Activated CD8-positive, alpha-beta memory T cell treated with anti-CD3 and anti-CD28 coated beads, Interleukin-2, amount 10 ng/mL, durations not matched to agents 7 days and 5 days (primary cell): ENCODE measurements at regions of chr7 and their contacts with region 1.

Region 1: GRCh38 chr7:129367700-129368388 is 66.4 kb upstream of the STRIP2 start:
- DNase-seq: peak; percentile 88
- ATAC-seq: peak; percentile 83
- H3K4me3 Mint-ChIP-seq: peak overlapping the region; percentile 70
- H3K27ac Mint-ChIP-seq: peak overlapping the region; percentile 87
- H3K4me1 Mint-ChIP-seq: peaks cover 40% of the 10 kb centered on the region
- H3K27me3 Mint-ChIP-seq: no peaks in the 10 kb centered on the region

Region 2: DNA sequence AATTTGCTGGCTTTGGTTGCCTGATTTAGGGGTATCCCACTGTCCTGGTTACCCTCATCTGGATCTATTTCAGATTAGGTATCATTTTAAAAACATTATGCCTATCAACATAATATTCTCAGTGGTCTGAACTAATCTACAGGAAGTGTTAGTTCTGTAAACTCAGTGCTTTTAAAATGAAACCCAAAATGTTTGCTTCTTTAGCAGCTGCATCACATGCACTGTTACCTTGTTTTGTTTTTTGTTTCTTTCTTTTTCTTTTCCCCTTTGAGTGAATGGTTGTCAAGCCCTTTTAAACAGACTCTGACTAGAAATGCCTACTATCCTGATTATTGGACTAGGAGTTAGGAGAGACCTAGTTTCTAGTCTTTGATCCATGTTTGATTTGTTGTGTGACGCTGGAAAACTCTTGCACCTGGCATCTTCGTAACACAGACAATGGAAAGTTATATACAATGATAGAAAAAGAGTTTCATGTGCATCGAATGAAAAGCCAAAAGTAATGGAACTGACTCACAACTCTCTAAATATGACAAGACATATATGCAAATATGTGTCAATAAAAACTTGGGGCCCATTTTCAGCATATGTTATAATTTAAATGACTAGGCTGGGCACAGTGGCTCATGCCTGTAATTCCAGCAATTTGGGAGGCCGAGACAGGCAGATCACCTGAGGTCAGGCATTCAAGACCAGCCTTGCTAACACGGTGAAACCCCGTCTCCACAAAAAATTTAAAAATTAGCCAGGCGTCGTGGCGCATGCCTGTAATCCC is 14.1 kb after region 1 on chr7:
- CTCF ChIA-PET with region 1: interaction called, 63 read pairs
- DNase-seq: no peak
- ATAC-seq: no peak
- H3K4me3 Mint-ChIP-seq: peak overlapping the region; percentile 15
- H3K27ac Mint-ChIP-seq: peak overlapping the region; percentile 73
- H3K4me1 Mint-ChIP-seq: peaks cover 35% of the 10 kb centered on the region
- H3K27me3 Mint-ChIP-seq: no peaks in the 10 kb centered on the region

Region 3: DNA sequence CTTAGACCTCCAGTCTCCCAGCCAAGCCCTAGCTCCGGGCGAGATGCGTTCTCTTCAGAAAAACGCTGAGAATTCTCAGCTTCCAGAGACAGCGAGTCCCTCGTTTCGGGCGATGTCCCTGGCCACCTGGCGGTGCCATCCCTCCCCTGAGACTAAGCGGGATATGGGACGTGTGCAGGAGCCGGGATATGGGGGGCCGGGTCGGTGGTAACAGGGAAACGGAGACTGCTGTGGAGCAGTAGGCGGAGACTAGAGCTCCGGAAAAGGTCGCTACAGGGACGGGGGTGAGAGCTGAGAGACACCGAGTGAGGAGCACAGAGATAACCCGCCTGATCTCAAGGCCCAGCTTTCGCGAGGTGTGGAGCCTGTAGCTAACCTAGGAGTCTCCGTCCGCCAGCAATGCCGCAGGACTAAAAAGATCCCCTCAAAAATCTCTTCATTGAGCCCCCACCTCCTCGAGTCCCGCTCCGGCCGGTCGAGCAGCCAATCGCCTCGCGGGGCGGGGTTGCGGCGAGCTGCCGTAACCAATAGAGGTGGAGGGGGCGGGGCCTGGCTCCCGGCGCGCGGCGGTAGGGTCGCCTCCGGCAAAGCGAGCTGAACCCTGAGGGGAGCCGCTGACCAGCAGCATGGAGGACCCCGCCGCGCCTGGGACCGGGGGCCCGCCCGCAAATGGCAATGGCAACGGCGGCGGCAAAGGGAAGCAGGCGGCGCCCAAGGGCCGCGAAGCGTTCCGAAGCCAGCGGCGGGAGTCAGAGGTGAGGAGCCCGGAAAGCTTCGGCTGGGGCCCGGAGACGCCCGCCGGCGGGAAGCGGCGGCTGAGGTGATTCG is 66.2 kb after region 1 on chr7 and contains the start of gene STRIP2:
- CTCF ChIA-PET with region 1: interaction called, 20 read pairs
- DNase-seq: peak; percentile 95
- ATAC-seq: peak; percentile 95
- H3K4me3 Mint-ChIP-seq: peak within 1 kb of the TSS; percentile 91
- H3K27ac Mint-ChIP-seq: peak within 1 kb of the TSS; percentile 82
- H3K4me1 Mint-ChIP-seq: peaks cover 34% of the 10 kb centered on the region
- H3K27me3 Mint-ChIP-seq: peaks cover 9% of the 10 kb centered on the region
- total RNA-seq, gene STRIP2: 15.6 to 19.0 TPM

Region 4: DNA sequence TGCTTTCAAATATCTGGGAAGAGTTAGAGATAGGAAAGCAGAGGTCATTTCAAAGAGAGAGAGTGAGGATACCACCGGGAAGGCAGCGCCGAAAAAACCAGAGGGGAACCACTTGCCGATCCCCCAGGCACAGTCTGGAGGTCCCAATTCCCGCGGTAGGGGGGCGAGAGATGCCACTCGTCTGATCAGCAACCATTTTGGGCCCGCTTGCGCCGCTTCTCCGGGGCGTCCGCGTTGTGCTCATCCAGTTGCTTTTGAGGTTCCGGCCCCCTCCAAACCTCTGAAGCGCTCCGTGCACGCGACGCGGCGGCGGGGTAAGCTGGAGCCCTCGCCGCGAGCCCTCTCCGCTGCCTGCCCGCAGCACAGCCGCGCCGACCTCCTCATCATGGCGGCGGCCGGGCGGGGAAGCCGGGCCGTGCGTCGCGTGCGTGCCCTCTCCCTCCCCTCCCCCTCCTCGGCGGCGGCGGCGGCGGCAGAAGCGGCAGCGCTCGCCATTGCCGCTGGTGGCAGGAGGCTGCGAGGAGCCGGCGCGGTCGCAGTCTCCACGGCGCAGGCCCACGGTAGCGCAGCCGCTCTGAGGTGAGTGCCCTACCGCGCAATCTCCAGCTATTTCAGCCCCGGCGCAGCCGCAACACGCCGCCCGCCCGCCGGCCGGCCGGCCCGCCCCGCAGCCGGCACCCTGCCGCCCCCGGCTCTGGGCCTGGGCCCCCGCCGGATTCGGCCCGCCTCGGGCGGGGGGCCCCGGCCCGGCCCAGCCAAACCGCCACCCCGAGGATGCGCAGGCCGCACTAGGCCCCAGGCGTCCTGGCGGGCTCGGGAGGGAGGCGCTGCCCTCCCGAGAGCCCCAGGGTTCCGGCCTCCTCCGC is 243.6 kb after region 1 on chr7 and contains the start of gene NRF1:
- CTCF ChIA-PET with region 1: interaction called, 10 read pairs
- DNase-seq: peak; percentile 92
- ATAC-seq: peak; percentile 88
- H3K4me3 Mint-ChIP-seq: peak within 1 kb of the TSS; percentile 94
- H3K27ac Mint-ChIP-seq: peak within 1 kb of the TSS; percentile 92
- H3K4me1 Mint-ChIP-seq: peaks cover 56% of the 10 kb centered on the region
- H3K27me3 Mint-ChIP-seq: no peaks in the 10 kb centered on the region
- total RNA-seq, gene NRF1: 26.4 to 29.5 TPM